ENCODE measurements at regions of chr7 and their contacts with region 1.

Region 1: GRCh38 chr7:106659963-106660861 is 746 bp downstream of the CCDC71L start:
- DNase-seq: peak; percentile 88
- ATAC-seq: peak; percentile 63
- H3K4me3 Mint-ChIP-seq: peak overlapping the region; percentile 94
- H3K27ac Mint-ChIP-seq: peak overlapping the region; percentile 89
- H3K4me1 Mint-ChIP-seq: peaks cover 22% of the 10 kb centered on the region
- H3K27me3 Mint-ChIP-seq: peaks cover 5% of the 10 kb centered on the region

Region 2: DNA sequence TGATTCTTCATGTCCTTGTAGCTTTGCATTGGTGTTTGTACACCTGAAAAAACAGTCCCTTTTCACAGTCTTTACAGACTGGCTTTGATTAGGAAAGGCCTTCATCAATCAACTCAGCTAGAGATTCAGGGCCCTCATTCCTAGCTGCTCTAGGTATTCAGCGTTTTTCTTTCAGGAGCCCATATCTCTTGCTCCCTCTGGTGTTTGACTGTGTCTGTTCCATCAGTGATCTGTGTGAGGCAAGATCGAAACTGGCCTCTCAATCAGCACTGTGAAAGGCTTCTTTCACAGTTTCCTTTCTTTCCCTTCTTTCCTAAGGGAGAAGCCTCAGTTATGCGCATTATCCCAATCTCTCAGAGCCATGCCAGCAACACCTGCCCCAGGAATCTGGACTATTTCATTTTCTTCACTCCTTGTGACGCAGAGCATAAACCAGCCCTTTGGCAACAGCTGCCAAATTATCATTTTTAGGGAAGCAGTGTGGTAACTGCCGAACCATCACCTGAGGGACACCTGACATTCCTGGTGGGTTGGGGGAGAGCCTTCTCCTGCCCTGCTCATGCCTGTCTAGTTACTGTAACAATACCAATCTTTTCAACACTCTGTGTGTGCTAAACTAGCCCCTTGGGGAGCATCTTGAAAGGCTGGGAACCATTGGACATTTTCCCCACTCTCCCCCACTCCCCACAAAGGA is 76.4 kb after region 1 on chr7:
- POLR2A ChIA-PET with region 1: interaction called, 15 read pairs
- DNase-seq: no peak
- ATAC-seq: peak; percentile 94
- H3K4me3 Mint-ChIP-seq: peak overlapping the region; percentile 33
- H3K27ac Mint-ChIP-seq: peak overlapping the region; percentile 28
- H3K4me1 Mint-ChIP-seq: peaks cover 15% of the 10 kb centered on the region
- H3K27me3 Mint-ChIP-seq: no peaks in the 10 kb centered on the region

Measured in activated naive CD8-positive, alpha-beta T cell treated with anti-CD3 and anti-CD28 coated beads, Interleukin-2, amount 10 ng/mL, durations not matched to agents 7 days and 5 days (primary cell).